ENCODE measurements at regions of chr4 and their contacts with region 1.

Region 1: DNA sequence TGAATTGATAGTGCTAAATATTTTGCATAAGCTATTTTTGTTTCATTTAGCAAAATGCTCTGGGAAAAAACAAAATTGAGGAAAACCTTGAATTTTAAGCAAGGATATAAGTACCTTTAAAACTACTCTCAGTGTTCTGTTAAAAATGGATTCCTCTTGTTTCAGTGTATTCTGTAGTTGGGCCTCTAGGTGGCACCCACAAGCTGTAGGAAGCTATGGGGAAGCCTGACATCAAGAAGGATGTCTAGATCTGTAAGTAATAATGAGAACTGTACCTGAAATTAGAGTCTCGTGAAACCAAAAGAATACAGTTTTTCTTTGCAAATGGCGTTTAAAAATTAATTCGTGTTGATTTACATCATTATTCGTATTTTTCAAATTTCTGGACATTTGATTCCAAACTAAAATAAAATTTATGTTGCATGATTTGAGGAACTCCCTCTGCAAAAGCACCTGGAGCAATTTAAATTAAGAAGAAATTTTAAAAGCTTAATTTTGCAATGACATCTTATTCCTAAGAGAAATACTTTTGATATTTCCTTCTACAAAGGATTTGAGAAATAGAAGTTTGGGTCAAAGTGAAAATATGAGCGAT is 51.2 kb downstream of the TMPRSS11E start:
- DNase-seq: peak in 3 of 10 donors; percentile 11 to 45 (median 21)
- H3K4me3 ChIP-seq: no peak overlapping the region
- H3K27ac ChIP-seq: no peak overlapping the region
- H3K27me3 ChIP-seq: peaks cover 0 to 4% (median 0%) of the 10 kb centered on the region in 45 donors
- CTCF ChIP-seq: peak; percentile 54 to 88 (median 75)

Region 2: GRCh38 chr4:69167300-69167699 is 668.8 kb after region 1 on chr4:
- intact Hi-C with region 1: loop called (anchors 5 to 10 kb)
- DNase-seq: no peak
- H3K4me3 ChIP-seq: no peak overlapping the region
- H3K27ac ChIP-seq: no peak overlapping the region
- H3K27me3 ChIP-seq: no peaks in the 10 kb centered on the region
- CTCF ChIP-seq: no peak

Region 3: GRCh38 chr4:69377562-69377961 is 879.1 kb after region 1 on chr4:
- intact Hi-C with region 1: no loop called
- DNase-seq: no peak
- H3K4me3 ChIP-seq: no peak overlapping the region
- H3K27ac ChIP-seq: no peak overlapping the region
- H3K27me3 ChIP-seq: peaks cover 0 to 6% (median 0%) of the 10 kb centered on the region in 45 donors
- CTCF ChIP-seq: no peak